ENCODE measurements at regions of chr19 and their contacts with region 1.

Region 1: GRCh38 chr19:12983542-12984142 is 11.6 kb upstream of the NFIX start:
- DNase-seq: peak; percentile 81 to 94 (median 93)
- ATAC-seq: peak; percentile 77 to 80
- H3K4me3 ChIP-seq: no peak overlapping the region
- H3K27ac ChIP-seq: no peak overlapping the region
- H3K4me1 ChIP-seq: peaks cover 3% of the 10 kb centered on the region
- H3K27me3 ChIP-seq: no peaks in the 10 kb centered on the region

Region 2: DNA sequence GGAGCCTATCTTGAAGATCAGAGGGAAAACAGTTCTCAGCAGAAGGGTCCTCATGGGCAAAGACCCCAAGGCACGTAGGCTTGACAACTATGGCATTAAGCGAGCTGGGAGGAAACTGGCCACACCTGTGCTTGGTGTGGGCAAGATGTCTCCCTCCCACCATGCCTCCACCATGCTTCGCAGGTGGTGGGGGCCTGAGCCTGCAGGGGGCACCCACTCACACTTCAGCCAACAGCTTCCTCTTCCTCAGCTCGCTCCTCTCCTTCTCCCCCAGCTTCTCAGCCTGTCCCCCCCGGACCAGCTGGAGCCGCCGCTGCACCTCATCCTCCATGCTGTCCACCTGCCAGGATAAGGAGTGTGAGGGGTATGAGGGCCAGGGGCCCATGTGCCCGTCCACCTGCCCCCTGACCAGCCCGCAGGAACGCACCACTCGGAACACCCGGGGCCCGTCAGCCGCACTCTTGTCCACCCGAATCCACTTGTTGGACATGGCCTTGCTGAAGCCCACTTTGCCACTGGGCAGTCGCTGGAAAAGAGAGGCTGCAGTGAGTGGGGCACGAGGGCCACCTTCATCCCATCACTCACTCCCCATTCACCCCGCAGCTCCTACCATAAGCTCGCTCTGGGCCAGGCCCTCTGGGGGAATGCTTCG is 53.5 kb before region 1 on chr19:
- intact Hi-C with region 1: no loop called
- DNase-seq: no peak
- ATAC-seq: no peak
- H3K4me3 ChIP-seq: no peak overlapping the region
- H3K27ac ChIP-seq: no peak overlapping the region
- H3K4me1 ChIP-seq: peaks cover 6% of the 10 kb centered on the region
- H3K27me3 ChIP-seq: no peaks in the 10 kb centered on the region

Region 3: GRCh38 chr19:13082192-13083007 is 98.8 kb after region 1 on chr19:
- intact Hi-C with region 1: no loop called
- DNase-seq: peak; percentile 52 to 76 (median 69)
- ATAC-seq: peak; percentile 38 to 50
- H3K4me3 ChIP-seq: no peak overlapping the region
- H3K27ac ChIP-seq: peak overlapping the region; percentile 56
- H3K4me1 ChIP-seq: peaks cover 23% of the 10 kb centered on the region
- H3K27me3 ChIP-seq: no peaks in the 10 kb centered on the region

Region 4: DNA sequence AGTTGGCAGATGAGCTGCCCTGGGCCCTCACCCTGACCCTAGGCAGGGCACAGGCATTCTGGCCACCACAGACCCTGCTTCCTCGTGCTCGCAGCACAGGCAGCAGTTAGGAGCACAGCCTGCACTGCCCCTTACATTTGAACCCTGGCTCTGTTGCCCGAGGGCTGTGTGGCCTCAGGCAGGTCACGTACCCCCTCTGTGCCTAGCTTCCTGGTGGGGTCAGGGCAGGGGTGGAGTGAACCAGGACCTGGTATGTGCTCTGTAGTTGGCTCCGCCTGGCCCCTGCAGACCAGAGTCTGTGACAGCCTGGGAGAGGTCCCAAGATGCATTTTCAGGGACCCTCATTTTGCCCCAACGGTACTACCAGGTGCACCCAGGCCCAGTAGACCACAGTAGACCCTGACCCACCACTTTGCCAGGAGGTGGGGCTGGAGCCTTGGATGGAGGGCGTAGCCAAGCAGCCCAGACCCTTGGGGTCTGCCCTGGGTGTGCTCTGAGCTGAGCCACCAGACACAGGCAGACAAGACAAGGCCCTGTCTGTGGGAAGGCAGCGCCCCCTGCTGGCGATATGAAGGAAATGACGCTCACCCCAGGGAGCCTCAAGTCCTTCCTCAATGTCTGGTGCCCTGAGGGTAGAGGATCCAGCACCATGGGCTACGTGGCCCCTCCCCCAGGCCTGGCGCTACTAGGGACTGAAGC is 109.9 kb after region 1 on chr19:
- intact Hi-C with region 1: loop called (anchors 2 to 10 kb)
- DNase-seq: peak; percentile 86 to 94 (median 92)
- ATAC-seq: peak; percentile 60 to 64
- H3K4me3 ChIP-seq: no peak overlapping the region
- H3K27ac ChIP-seq: peak overlapping the region; percentile 59
- H3K4me1 ChIP-seq: no peaks in the 10 kb centered on the region
- H3K27me3 ChIP-seq: no peaks in the 10 kb centered on the region

Region 5: GRCh38 chr19:13117772-13118423 is 134.3 kb after region 1 on chr19 and contains the start of gene NACC1:
- intact Hi-C with region 1: no loop called
- DNase-seq: peak; percentile 91 to 96 (median 96)
- ATAC-seq: peak; percentile 95 to 96
- H3K4me3 ChIP-seq: peak within 1 kb of the TSS; percentile 97
- H3K27ac ChIP-seq: peak within 1 kb of the TSS; percentile 84
- H3K4me1 ChIP-seq: peaks cover 14% of the 10 kb centered on the region
- H3K27me3 ChIP-seq: no peaks in the 10 kb centered on the region
- total RNA-seq, gene NACC1: 27.6 to 44.2 (median 40.2) TPM